Naive thymus-derived CD8-positive, alpha-beta T cell (primary cell): ENCODE measurements at regions of chr15 and their contacts with region 1.

Region 1: DNA sequence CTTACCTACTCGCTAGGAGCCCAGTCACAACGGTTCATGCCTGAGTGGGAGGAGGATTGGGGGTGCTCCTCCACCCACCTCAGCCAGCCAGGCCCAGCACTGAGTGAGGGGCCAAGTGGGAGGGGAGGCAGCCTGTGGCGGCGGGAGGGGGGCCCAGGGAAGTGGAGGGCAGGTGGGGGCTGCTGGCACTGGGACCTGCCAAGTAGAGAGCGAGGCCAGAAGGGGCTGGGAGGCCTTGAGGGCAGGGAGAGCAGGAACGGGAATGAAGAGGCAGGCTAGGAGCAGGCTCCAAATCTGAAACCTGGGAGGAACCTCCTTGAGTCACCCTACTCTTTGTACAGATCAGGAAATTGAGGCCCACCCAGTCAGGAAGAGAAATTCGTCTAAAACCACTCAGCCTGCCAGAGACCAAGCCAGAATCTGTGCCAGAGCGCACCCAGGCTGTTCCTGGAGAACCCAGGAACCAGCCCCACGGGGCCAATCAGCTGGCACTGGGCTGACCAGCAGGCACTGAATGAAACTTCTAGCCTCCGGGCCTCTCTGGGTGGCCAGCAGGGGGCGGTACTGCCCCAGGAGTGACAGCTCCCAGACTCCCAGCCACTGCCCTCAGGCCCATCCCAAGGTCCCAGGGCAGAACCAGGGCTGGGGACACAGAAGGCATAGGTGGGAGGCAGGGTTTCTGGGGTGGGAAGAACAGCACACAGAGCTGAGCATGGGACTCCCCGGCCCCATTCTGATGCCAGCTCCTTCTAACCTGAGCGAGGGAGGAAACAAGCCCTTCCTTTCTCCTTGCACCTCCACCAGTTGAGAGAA is 14.8 kb upstream of the CYP11A1 start:
- DNase-seq: peak; percentile 42 to 87 (median 73)
- ATAC-seq: peak; percentile 58 to 65
- H3K4me3 Mint-ChIP-seq: no peak overlapping the region
- H3K27ac Mint-ChIP-seq: peak overlapping the region in 4 of 10 donors; percentile 18 to 88 (median 62)
- H3K4me1 Mint-ChIP-seq: peaks cover 25 to 42% (median 34%) of the 10 kb centered on the region in 4 donors
- H3K27me3 Mint-ChIP-seq: no peaks in the 10 kb centered on the region

Region 2: DNA sequence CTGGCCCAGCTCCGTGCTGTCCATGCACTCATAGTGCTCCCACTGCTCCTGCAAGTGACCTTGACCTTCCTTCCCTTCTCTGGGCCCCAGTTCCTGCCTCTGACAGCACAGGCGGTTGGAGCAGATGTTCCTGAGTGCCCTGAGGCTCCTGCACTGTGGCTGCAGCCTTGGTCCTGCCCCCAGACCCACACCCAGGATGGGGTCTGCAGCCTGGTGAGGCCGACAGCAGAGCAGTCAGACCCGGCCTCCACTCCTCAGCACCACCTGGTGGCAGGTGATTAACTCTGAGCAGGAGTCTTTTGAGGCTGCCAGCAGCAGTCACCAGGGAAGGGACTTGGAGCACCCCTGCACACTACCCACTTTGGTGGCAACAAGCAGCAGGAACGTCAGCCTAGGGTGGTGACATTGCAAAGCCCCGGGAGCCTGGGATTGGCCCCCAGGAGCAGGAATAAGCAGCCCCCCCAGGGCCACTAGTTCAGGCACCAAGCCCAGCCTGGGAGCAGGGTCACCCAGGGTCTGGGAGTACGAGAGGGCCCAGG is 79.3 kb before region 1 on chr15:
- POLR2A ChIA-PET with region 1: no interaction called
- DNase-seq: peak in 4 of 10 donors; percentile 22 to 26 (median 24)
- ATAC-seq: no peak
- H3K4me3 Mint-ChIP-seq: no peak overlapping the region
- H3K27ac Mint-ChIP-seq: peak overlapping the region in 1 of 10 donors; percentile 48
- H3K4me1 Mint-ChIP-seq: peaks cover 0 to 7% (median 4%) of the 10 kb centered on the region in 4 donors
- H3K27me3 Mint-ChIP-seq: peaks cover 9 to 67% (median 48%) of the 10 kb centered on the region in 5 donors

Region 3: GRCh38 chr15:74396445-74397238 is 14.4 kb after region 1 on chr15:
- POLR2A ChIA-PET with region 1: interaction called, 46 read pairs
- DNase-seq: peak in 6 of 10 donors; percentile 19 to 48 (median 36)
- ATAC-seq: peak; percentile 51 to 70
- H3K4me3 Mint-ChIP-seq: peak overlapping the region in 6 of 10 donors; percentile 23 to 77 (median 65)
- H3K27ac Mint-ChIP-seq: peak overlapping the region in 9 of 10 donors; percentile 19 to 96 (median 84)
- H3K4me1 Mint-ChIP-seq: peaks cover 39 to 85% (median 72%) of the 10 kb centered on the region in 4 donors
- H3K27me3 Mint-ChIP-seq: no peaks in the 10 kb centered on the region

Region 4: GRCh38 chr15:74402873-74403587 is 20.8 kb after region 1 on chr15:
- POLR2A ChIA-PET with region 1: interaction called, 46 read pairs
- DNase-seq: peak in 6 of 10 donors; percentile 35 to 75 (median 49)
- ATAC-seq: peak; percentile 70 to 73
- H3K4me3 Mint-ChIP-seq: peak overlapping the region in 9 of 10 donors; percentile 46 to 70 (median 60)
- H3K27ac Mint-ChIP-seq: peak overlapping the region in 9 of 10 donors; percentile 22 to 85 (median 65)
- H3K4me1 Mint-ChIP-seq: peaks cover 31 to 76% (median 63%) of the 10 kb centered on the region in 4 donors
- H3K27me3 Mint-ChIP-seq: no peaks in the 10 kb centered on the region

Region 5: GRCh38 chr15:74438721-74439316 is 56.6 kb after region 1 on chr15:
- POLR2A ChIA-PET with region 1: interaction called, 14 read pairs
- DNase-seq: peak; percentile 50 to 89 (median 74)
- ATAC-seq: peak; percentile 70 to 84
- H3K4me3 Mint-ChIP-seq: peak overlapping the region in 1 of 10 donors; percentile 21
- H3K27ac Mint-ChIP-seq: peak overlapping the region in 3 of 10 donors; percentile 12 to 34 (median 20)
- H3K4me1 Mint-ChIP-seq: peaks cover 13 to 26% (median 24%) of the 10 kb centered on the region in 4 donors
- H3K27me3 Mint-ChIP-seq: no peaks in the 10 kb centered on the region